ENCODE measurements at regions of chr20 and their contacts with region 1.

Region 1: GRCh38 chr20:17682103-17682888 is at the start of gene RRBP1:
- DNase-seq: peak; percentile 93 to 95
- H3K4me3 ChIP-seq: peak within 1 kb of the TSS; percentile 87 to 96 (median 94)
- H3K27ac ChIP-seq: peak within 1 kb of the TSS; percentile 61; the same call in 1 of the 2 replicates
- H3K4me1 ChIP-seq: peaks cover 6 to 12% (median 9%) of the 10 kb centered on the region in 4 experiments; a peak in 6 of 7 replicates
- H3K27me3 ChIP-seq: no peaks in the 10 kb centered on the region
- CTCF ChIP-seq: peak; percentile 63 to 77 (median 67)
- EP300 ChIP-seq: peak in 1 of 2 experiments; percentile 31; a peak in 1 of 3 replicates
- POLR2A ChIP-seq: peak in 1 of 2 experiments; percentile 84; a peak in 2 of 3 replicates
- RAD21 ChIP-seq: peak; percentile 36 to 51; a peak in 3 of 4 replicates
- total RNA-seq, gene RRBP1: 153 and 157 TPM in 2 replicates

Region 2: DNA sequence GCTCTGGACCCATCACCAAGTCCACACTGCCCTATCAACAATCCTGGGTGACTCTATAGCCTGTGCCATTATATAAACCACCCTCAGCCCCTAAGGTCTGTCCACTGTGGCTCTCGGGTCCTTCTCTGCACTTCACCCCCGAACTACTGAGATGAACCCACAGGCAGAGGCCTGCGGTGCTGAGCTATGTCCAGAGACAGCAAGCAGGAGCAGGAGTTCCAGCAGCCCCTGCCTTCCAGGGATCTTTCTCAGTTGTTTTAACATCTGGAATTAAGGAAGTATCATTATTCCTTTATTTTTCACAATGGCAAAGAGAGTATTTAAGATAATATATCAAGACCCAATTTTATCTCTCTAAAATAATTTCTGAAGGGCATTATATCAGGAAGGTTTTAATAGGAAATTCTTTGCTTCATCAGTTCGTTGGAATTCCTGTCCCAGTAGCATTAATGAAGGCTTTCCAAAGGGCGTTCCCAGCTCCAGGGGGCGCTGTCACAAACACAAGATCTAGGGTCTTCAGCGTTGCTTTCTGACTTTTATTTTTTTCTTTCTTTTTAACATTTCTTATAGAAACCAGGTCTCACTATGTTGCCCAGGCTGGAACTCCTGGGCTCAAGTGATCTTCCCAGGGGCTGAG is 27.5 kb before region 1 on chr20:
- CTCF ChIA-PET with region 1: interaction called, 18 read pairs
- POLR2A ChIA-PET with region 1: interaction called, 3 read pairs
- DNase-seq: peak in 1 of 2 experiments; percentile 85
- H3K4me3 ChIP-seq: no peak overlapping the region
- H3K27ac ChIP-seq: no peak overlapping the region
- H3K4me1 ChIP-seq: peaks cover 6 to 9% (median 8%) of the 10 kb centered on the region in 4 experiments; a peak in 5 of 7 replicates
- H3K27me3 ChIP-seq: no peaks in the 10 kb centered on the region
- CTCF ChIP-seq: peak; percentile 55 to 72 (median 58); a peak in 3 of 4 replicates
- EP300 ChIP-seq: no peak
- POLR2A ChIP-seq: no peak
- RAD21 ChIP-seq: peak; percentile 23 to 52; a peak in 2 of 4 replicates

Region 3: DNA sequence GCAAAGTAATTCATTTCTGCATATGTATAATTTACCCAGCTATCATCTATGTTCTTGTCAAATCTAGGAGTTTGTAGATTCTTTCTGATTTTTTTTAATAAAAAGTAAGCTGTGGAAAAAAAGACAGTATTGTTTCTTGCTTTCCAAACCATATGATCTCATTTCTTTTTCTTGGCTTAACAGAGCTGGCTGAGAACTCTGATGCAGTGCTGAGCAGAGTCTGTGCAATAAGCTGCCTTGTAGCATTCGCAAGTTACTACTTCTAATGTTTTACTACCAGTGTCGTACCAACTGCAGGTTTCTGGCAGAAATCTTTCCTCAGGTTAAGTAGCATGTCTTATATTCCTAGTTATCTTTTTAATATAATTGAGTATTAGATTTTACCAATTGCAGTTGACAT is 15.8 kb before region 1 on chr20:
- CTCF ChIA-PET with region 1: interaction called, 11 read pairs
- POLR2A ChIA-PET with region 1: interaction called, 21 read pairs
- DNase-seq: no peak
- H3K4me3 ChIP-seq: no peak overlapping the region
- H3K27ac ChIP-seq: no peak overlapping the region
- H3K4me1 ChIP-seq: peaks cover 2 to 3% (median 2%) of the 10 kb centered on the region in 4 experiments; a peak in 3 of 7 replicates
- H3K27me3 ChIP-seq: no peaks in the 10 kb centered on the region
- CTCF ChIP-seq: no peak
- EP300 ChIP-seq: no peak
- POLR2A ChIP-seq: no peak
- RAD21 ChIP-seq: no peak

Region 4: GRCh38 chr20:17693444-17694001 is 11.2 kb after region 1 on chr20:
- CTCF ChIA-PET with region 1: interaction called, 24 read pairs
- POLR2A ChIA-PET with region 1: interaction called, 9 read pairs
- DNase-seq: no peak
- H3K4me3 ChIP-seq: no peak overlapping the region
- H3K27ac ChIP-seq: no peak overlapping the region
- H3K4me1 ChIP-seq: peaks cover 0 to 5% (median 3%) of the 10 kb centered on the region in 4 experiments; a peak in 4 of 7 replicates
- H3K27me3 ChIP-seq: no peaks in the 10 kb centered on the region
- CTCF ChIP-seq: no peak
- EP300 ChIP-seq: no peak
- POLR2A ChIP-seq: no peak
- RAD21 ChIP-seq: no peak

Region 5: DNA sequence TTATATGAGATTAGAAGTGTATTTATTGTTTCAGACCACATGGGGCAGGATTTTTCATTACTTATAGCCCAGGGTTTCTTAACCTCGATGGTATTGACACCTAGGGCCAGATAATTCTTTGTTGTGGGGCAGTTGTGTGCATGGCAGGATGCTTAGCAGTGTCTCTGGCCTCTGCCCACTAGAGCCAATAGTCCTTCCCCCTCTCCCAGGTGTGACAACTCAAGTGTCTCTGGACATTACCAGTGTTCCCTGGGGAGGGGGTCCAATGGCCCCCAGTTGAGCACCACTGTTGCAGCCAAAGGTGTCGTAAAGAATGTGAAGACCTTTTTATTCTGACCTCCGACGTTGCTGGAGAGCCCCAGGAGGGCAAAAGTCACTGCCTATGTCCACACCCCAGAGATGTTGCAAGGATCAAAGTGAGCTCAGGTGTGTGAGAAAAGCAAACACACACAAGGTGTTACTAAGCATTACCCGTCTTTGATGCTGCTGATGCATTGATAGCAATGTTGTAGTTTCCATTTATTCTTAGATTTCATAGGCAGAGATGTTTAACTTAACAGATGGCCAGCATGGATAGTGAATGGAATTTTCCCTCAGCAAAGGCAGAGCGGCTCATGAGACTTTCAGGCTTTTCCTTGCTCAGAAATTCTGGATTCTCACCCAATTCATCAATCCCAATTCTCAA is 39.6 kb after region 1 on chr20:
- CTCF ChIA-PET with region 1: no interaction called
- POLR2A ChIA-PET with region 1: no interaction called
- DNase-seq: no peak
- H3K4me3 ChIP-seq: no peak overlapping the region
- H3K27ac ChIP-seq: no peak overlapping the region
- H3K4me1 ChIP-seq: no peaks in the 10 kb centered on the region
- H3K27me3 ChIP-seq: no peaks in the 10 kb centered on the region
- CTCF ChIP-seq: no peak
- EP300 ChIP-seq: no peak
- POLR2A ChIP-seq: no peak
- RAD21 ChIP-seq: no peak; a peak in 1 of 4 replicates

Region 6: DNA sequence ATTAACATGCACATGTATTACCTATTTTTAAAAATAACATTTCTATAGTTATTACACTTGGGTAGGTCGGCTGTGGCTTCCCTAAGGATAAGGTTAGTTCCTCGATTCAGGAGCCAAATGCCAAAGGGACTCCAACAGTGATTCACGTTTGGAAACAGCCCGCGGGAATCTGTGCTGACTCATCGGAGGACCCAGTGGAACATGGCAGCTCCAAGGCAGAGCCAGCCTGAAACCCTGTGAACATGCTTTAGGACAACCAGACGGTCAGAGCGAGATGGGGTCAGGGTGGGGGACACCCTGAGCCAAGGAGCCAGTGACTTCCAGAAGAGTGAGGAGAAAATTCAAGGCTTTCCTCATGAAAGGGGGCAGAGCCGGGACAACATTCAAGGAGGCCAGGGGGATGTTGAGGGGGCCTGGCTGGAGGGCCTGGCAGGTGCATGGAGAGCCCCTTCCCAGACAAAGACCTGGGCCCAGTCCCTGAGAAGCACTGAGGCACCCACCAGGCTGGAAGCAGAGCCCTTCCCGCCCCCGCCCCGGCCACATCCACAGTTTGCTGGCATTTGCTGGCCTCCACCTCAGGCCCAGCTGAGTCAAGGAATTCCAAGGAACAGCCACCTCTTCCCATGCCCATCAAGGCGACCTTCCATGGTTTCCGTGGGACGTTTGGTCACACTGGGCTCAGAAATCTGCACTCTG is 153.1 kb after region 1 on chr20:
- CTCF ChIA-PET with region 1: interaction called, 11 read pairs
- POLR2A ChIA-PET with region 1: no interaction called
- DNase-seq: no peak
- H3K4me3 ChIP-seq: no peak overlapping the region
- H3K27ac ChIP-seq: no peak overlapping the region
- H3K4me1 ChIP-seq: peaks cover 0 to 15% (median 2%) of the 10 kb centered on the region in 4 experiments; a peak in 4 of 7 replicates
- H3K27me3 ChIP-seq: no peaks in the 10 kb centered on the region
- CTCF ChIP-seq: no peak
- EP300 ChIP-seq: no peak
- POLR2A ChIP-seq: no peak
- RAD21 ChIP-seq: no peak

Region 7: GRCh38 chr20:17898548-17898994 is 216.3 kb after region 1 on chr20:
- CTCF ChIA-PET with region 1: interaction called, 16 read pairs
- POLR2A ChIA-PET with region 1: interaction called, 6 read pairs
- DNase-seq: peak in 1 of 2 experiments; percentile 81
- H3K4me3 ChIP-seq: no peak overlapping the region
- H3K27ac ChIP-seq: no peak overlapping the region
- H3K4me1 ChIP-seq: peaks cover 8 to 19% (median 12%) of the 10 kb centered on the region in 4 experiments
- H3K27me3 ChIP-seq: no peaks in the 10 kb centered on the region; a peak in 1 of 7 replicates
- CTCF ChIP-seq: peak; percentile 82 to 91 (median 88)
- EP300 ChIP-seq: no peak
- POLR2A ChIP-seq: no peak
- RAD21 ChIP-seq: peak; percentile 95 to 96

Region 8: GRCh38 chr20:17968366-17969279 is 286.3 kb after region 1 on chr20 and contains the starts of genes MGME1 and SNX5:
- CTCF ChIA-PET with region 1: no interaction called
- POLR2A ChIA-PET with region 1: interaction called, 19 read pairs
- DNase-seq: peak; percentile 98 to 99
- H3K4me3 ChIP-seq: peak within 1 kb of the TSS; percentile 77 to 99 (median 91)
- H3K27ac ChIP-seq: peak within 1 kb of the TSS; percentile 100
- H3K4me1 ChIP-seq: peaks cover 5 to 14% (median 10%) of the 10 kb centered on the region in 4 experiments; a peak in 6 of 7 replicates
- H3K27me3 ChIP-seq: no peaks in the 10 kb centered on the region
- CTCF ChIP-seq: no peak
- EP300 ChIP-seq: no peak
- POLR2A ChIP-seq: peak; percentile 97 to 98
- RAD21 ChIP-seq: no peak
- total RNA-seq, gene MGME1: 56.3 and 59.0 TPM in 2 replicates
- total RNA-seq, gene SNX5: 181 and 194 TPM in 2 replicates

Measured in H1 (cell line).